A549 (cell line): ENCODE measurements at regions of chr5 and their contacts with region 1.

Region 1: GRCh38 chr5:10724799-10725507 is 36.1 kb downstream of the DAP start:
- DNase-seq: peak; percentile 83 to 84
- ATAC-seq: peak; percentile 80 to 91
- H3K4me3 ChIP-seq: peak overlapping the region; percentile 31
- H3K27ac ChIP-seq: peak overlapping the region; percentile 76 to 85
- H3K4me1 ChIP-seq: peaks cover 38% of the 10 kb centered on the region
- CTCF ChIP-seq: peak; percentile 55
- EP300 ChIP-seq: peak in 1 of 2 experiments; percentile 30; a peak in 1 of 5 replicates
- POLR2A ChIP-seq: no peak
- RAD21 ChIP-seq: peak; percentile 48 to 50

Region 2: GRCh38 chr5:10701567-10702039 is 23.4 kb before region 1 on chr5:
- CTCF ChIA-PET with region 1: interaction called, 29 read pairs
- POLR2A ChIA-PET with region 1: interaction called, 3 read pairs
- DNase-seq: peak; percentile 41 to 46
- ATAC-seq: peak in 1 of 2 experiments; percentile 77; a peak in 3 of 6 replicates
- H3K4me3 ChIP-seq: no peak overlapping the region
- H3K27ac ChIP-seq: no peak overlapping the region
- H3K4me1 ChIP-seq: peaks cover 24% of the 10 kb centered on the region
- CTCF ChIP-seq: peak; percentile 51
- EP300 ChIP-seq: no peak
- POLR2A ChIP-seq: no peak
- RAD21 ChIP-seq: peak; percentile 60 to 70

Region 3: DNA sequence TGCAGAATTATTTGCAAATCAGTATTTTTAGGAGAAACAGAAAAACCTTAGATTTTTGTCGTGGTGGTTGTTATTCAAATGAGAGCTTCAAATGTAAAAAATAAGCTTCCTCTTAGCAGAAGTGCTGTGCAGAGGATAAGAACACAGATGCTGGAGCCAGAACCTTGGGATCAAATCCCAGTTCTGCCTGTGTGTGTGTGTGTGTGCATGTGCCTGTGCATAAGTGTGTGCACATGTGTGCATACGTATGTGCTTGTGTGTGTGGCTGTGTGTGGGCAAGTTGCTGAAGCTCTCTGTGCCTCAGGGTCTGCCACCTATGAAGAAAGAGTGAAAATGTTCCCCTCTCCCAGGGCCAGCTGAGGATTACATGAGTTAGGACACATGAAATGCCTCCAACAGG is 27.5 kb after region 1 on chr5:
- CTCF ChIA-PET with region 1: interaction called, 13 read pairs
- POLR2A ChIA-PET with region 1: interaction called, 4 read pairs
- DNase-seq: no peak
- ATAC-seq: no peak
- H3K4me3 ChIP-seq: no peak overlapping the region
- H3K27ac ChIP-seq: no peak overlapping the region
- H3K4me1 ChIP-seq: peaks cover 9% of the 10 kb centered on the region
- CTCF ChIP-seq: no peak
- EP300 ChIP-seq: no peak
- POLR2A ChIP-seq: no peak
- RAD21 ChIP-seq: no peak